WTC11 (cell line): ENCODE measurements at regions of chr17 and their contacts with region 1.

Region 1: GRCh38 chr17:50865984-50866774 is at the start of gene TOB1:
- DNase-seq: peak; percentile 97
- ATAC-seq: peak; percentile 78
- H3K4me3 Mint-ChIP-seq: peak within 1 kb of the TSS; percentile 96
- H3K27ac Mint-ChIP-seq: peak within 1 kb of the TSS; percentile 100
- H3K4me1 Mint-ChIP-seq: peaks cover 30% of the 10 kb centered on the region
- H3K27me3 Mint-ChIP-seq: no peaks in the 10 kb centered on the region
- CTCF ChIP-seq: no peak
- total RNA-seq, gene TOB1: 33.5 to 37.9 TPM (median 36.0 TPM) in 3 replicates

Region 2: GRCh38 chr17:50769884-50770283 is 96.3 kb before region 1 on chr17:
- CTCF ChIA-PET with region 1: no interaction called
- POLR2A ChIA-PET with region 1: no interaction called
- DNase-seq: no peak
- ATAC-seq: no peak
- H3K4me3 Mint-ChIP-seq: no peak overlapping the region
- H3K27ac Mint-ChIP-seq: no peak overlapping the region
- H3K4me1 Mint-ChIP-seq: peaks cover 5% of the 10 kb centered on the region; the same call in 1 of the 2 replicates
- H3K27me3 Mint-ChIP-seq: no peaks in the 10 kb centered on the region
- CTCF ChIP-seq: no peak

Region 3: GRCh38 chr17:50853015-50853615 is 13.1 kb before region 1 on chr17:
- CTCF ChIA-PET with region 1: interaction called, 36 read pairs
- POLR2A ChIA-PET with region 1: interaction called, 10 read pairs
- DNase-seq: no peak
- ATAC-seq: no peak
- H3K4me3 Mint-ChIP-seq: no peak overlapping the region
- H3K27ac Mint-ChIP-seq: peak overlapping the region; percentile 3; the same call in 1 of the 2 replicates
- H3K4me1 Mint-ChIP-seq: peaks cover 11% of the 10 kb centered on the region
- H3K27me3 Mint-ChIP-seq: no peaks in the 10 kb centered on the region; the same call in 1 of the 2 replicates
- CTCF ChIP-seq: no peak

Region 4: GRCh38 chr17:50919321-50920085 is 53.3 kb after region 1 on chr17:
- CTCF ChIA-PET with region 1: interaction called, 7 read pairs
- POLR2A ChIA-PET with region 1: interaction called, 21 read pairs
- DNase-seq: peak; percentile 75
- ATAC-seq: peak; percentile 84
- H3K4me3 Mint-ChIP-seq: no peak overlapping the region
- H3K27ac Mint-ChIP-seq: no peak overlapping the region
- H3K4me1 Mint-ChIP-seq: peaks cover 57% of the 10 kb centered on the region
- H3K27me3 Mint-ChIP-seq: no peaks in the 10 kb centered on the region; the same call in 1 of the 2 replicates
- CTCF ChIP-seq: no peak

Region 5: DNA sequence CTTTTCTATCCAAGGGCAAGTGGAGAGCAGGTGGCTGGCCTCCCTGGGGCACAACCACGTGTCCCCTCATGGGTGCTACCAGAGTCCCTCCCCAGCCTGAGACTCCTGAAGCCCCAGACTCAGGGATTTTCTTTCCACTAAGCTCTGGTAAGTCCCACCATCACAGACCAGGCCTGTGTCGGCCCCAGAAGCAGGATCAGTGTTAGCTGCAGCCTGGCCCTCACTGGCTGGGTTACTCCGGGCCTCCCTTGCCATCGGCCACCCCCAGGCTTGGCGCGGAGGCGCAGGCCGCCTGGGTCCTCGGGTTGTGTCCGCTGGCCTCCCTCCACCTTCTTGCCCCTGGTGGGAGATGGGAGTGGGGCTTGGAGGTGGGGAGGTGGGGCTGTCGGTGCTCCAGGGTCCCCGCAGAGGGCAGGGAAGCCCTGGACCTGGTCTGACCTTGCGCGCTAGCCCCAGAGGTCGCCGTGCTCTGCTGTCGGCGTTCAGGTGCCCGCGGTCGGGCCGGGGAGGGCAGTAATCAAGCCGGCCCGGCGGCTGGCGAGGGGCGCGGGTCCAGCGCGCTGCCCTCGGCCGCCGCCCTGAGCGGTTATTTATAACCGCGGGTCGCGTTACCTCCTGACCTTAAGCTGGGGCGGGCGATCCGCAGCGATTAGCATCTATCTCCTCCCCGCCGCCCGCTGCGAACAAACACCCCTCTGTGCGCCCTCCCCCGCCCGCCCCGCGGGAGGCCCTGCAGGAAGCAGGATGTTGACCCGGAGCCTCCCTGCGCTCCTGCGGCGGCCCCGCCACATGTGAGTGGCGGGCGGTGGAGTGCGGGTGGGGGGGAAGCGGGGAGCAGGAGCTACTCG is 78.1 kb after region 1 on chr17:
- CTCF ChIA-PET with region 1: interaction called, 75 read pairs
- POLR2A ChIA-PET with region 1: interaction called, 34 read pairs
- DNase-seq: peak; percentile 65
- ATAC-seq: peak; percentile 59
- H3K4me3 Mint-ChIP-seq: peak overlapping the region; percentile 54
- H3K27ac Mint-ChIP-seq: no peak overlapping the region
- H3K4me1 Mint-ChIP-seq: peaks cover 24% of the 10 kb centered on the region
- H3K27me3 Mint-ChIP-seq: peaks cover 15% of the 10 kb centered on the region
- CTCF ChIP-seq: no peak

Region 6: DNA sequence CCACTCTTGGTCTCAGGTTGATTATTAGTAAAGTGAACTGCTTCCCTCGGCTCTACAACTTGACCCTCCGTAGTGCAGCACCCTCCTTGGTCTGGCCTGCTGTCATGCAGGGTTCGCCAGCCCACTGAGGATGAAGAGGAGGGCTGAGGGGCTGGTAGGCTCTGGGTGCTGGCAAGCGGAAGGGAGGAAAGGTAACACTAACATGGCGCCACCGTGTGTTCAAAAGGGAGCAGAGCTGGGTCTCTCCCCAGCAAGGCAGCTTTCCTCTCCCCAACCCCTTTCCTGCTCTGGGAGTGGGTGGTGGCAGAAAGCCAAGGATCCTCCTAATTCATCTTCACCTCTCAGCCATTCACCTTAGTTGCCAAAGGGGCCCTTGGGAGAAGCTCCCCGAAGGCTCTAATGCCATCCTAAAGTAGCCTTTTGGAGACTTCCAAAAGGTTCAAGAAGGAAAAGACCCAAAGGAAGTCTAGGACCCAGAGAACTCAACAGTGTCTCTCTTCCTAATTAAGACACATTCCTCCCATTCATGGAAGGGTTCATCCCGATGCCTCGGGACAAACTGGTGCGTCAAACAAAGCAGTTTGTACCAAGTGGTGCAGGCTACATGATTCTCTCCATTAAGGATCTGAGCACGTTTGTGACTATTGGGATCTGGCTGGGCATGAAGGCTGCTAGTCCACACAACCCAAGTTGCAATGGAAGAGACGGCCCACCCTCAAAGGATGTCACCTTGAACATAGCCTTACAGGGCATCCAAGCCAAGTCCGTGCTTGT is 90.8 kb after region 1 on chr17:
- CTCF ChIA-PET with region 1: interaction called, 63 read pairs
- POLR2A ChIA-PET with region 1: interaction called, 22 read pairs
- DNase-seq: peak; percentile 79
- ATAC-seq: peak; percentile 89
- H3K4me3 Mint-ChIP-seq: no peak overlapping the region
- H3K27ac Mint-ChIP-seq: 0 out of 2 replicates have a peak overlapping the region, but pooled peaks have one; percentile 19
- H3K4me1 Mint-ChIP-seq: peaks cover 36% of the 10 kb centered on the region
- H3K27me3 Mint-ChIP-seq: no peaks in the 10 kb centered on the region
- CTCF ChIP-seq: peak; percentile 44; the same call in 1 of the 2 replicates

Region 7: GRCh38 chr17:51097708-51098446 is 231.7 kb after region 1 on chr17:
- CTCF ChIA-PET with region 1: no interaction called
- POLR2A ChIA-PET with region 1: no interaction called
- DNase-seq: no peak
- ATAC-seq: no peak
- H3K4me3 Mint-ChIP-seq: no peak overlapping the region
- H3K27ac Mint-ChIP-seq: no peak overlapping the region
- H3K4me1 Mint-ChIP-seq: no peaks in the 10 kb centered on the region
- H3K27me3 Mint-ChIP-seq: no peaks in the 10 kb centered on the region
- CTCF ChIP-seq: no peak